ENCODE measurements at regions of chr1 and their contacts with region 1.

Region 1: DNA sequence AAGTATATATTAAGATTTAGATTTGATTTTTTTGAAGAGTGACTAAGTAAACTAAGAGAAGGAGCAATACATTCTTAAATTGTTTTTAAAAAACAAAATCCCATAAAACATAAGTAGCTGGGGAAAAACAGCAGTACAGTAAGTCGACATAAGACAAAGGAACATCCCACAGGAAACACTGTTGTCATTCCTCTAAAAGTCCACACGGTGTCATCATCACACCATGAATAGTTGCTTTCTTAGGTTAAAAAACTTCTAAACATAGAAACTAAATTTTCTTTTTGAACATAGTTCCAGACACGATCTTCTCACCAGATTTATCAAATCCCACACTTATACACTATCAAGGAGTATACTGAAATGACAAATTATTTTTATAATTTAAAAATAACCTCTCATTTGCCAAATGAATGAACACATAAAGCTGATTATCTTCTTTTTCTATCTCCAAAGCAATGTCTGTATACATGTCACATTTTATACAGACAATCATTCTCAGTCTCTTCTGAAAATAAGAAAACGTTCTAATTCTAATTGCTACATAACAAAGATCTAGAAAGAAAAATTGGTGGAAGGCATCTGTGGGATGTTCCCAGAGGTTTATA is 15.8 kb downstream of the ODF2L start:
- DNase-seq: no peak
- ATAC-seq: peak in 3 of 4 donors; percentile 54 to 72 (median 67)
- H3K4me3 ChIP-seq: peak overlapping the region in 7 of 12 donors; percentile 1 to 45 (median 13)
- H3K27ac ChIP-seq: no peak overlapping the region
- H3K4me1 ChIP-seq: peaks cover 0 to 21% (median 3%) of the 10 kb centered on the region in 12 donors
- H3K27me3 ChIP-seq: no peaks in the 10 kb centered on the region
- CTCF ChIP-seq: peak; percentile 69 to 90 (median 82)
- POLR2A ChIP-seq: no peak

Region 2: GRCh38 chr1:86507935-86508582 is 127.7 kb after region 1 on chr1:
- intact Hi-C with region 1: loop called (anchors 2 to 10 kb)
- DNase-seq: peak in 1 of 5 donors; percentile 21
- ATAC-seq: no peak
- H3K4me3 ChIP-seq: no peak overlapping the region
- H3K27ac ChIP-seq: no peak overlapping the region
- H3K4me1 ChIP-seq: peaks cover 0 to 24% (median 8%) of the 10 kb centered on the region in 12 donors
- H3K27me3 ChIP-seq: no peaks in the 10 kb centered on the region
- CTCF ChIP-seq: peak; percentile 29 to 66 (median 52)
- POLR2A ChIP-seq: no peak

Region 3: DNA sequence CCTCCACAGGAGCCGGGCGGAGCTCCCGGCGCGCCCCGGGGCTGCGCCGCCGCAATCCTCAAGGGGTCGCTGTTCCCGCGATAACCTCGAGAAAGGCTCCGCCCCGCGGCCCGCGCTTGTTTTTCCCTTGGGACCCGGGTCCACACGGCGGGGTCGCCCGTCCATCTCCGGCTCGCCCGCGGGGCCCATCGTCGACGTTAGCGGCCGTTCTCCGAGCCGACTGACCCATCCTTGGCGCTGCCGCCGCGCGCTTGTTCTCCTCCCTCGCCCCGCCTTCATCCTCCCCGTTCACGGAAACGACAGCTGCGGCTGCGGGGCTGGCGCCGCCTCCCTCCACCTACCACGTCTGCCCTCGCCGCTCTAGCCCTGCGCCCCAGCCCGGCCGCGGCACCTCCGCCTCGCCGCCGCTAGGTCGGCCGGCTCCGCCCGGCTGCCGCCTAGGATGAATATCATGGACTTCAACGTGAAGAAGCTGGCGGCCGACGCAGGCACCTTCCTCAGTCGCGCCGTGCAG is 324.2 kb after region 1 on chr1 and contains the start of gene SH3GLB1:
- intact Hi-C with region 1: loop called in 3 of 10 experiments (anchors 10 kb)
- DNase-seq: peak; percentile 88 to 94 (median 91)
- ATAC-seq: peak; percentile 83 to 96 (median 91)
- H3K4me3 ChIP-seq: peak within 1 kb of the TSS; percentile 63 to 96 (median 89)
- H3K27ac ChIP-seq: peak within 1 kb of the TSS; percentile 95 to 100 (median 99)
- H3K4me1 ChIP-seq: peaks cover 0 to 49% (median 36%) of the 10 kb centered on the region in 12 donors
- H3K27me3 ChIP-seq: no peaks in the 10 kb centered on the region
- CTCF ChIP-seq: peak; percentile 90 to 99 (median 97)
- POLR2A ChIP-seq: peak; percentile 14 to 64
- total RNA-seq, gene SH3GLB1: 53.6 to 203 (median 127) TPM

Region 4: GRCh38 chr1:86833461-86834215 is 453.3 kb after region 1 on chr1:
- intact Hi-C with region 1: loop called in 1 of 10 experiments (anchors 5 kb)
- DNase-seq: peak; percentile 62 to 77 (median 64)
- ATAC-seq: peak; percentile 65 to 93 (median 88)
- H3K4me3 ChIP-seq: no peak overlapping the region
- H3K27ac ChIP-seq: no peak overlapping the region
- H3K4me1 ChIP-seq: peaks cover 0 to 8% (median 0%) of the 10 kb centered on the region in 12 donors
- H3K27me3 ChIP-seq: no peaks in the 10 kb centered on the region
- CTCF ChIP-seq: peak; percentile 51 to 75 (median 62)
- POLR2A ChIP-seq: no peak